ACHN (cell line): ENCODE measurements at regions of chr7 and their contacts with region 1.

Region 1: DNA sequence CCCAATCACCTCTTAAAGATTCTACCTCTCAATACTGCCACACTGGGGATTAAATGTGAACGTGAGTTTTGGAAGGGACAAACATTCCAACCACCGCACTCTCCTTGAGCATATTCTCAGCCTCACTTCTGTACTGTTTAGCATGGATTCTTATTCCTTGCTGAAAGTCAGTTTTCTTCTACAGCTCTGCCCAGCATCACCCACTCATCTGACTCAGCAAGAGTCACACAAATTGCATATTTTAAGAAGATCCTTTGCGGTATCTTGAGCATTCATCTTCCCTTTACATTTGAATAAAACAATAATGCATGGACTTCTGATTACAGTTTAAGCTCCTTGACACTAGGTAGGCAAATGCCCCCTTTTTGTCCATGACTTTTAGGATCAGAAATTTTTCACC is 251.6 kb upstream of the MKLN1 start:
- DNase-seq: no peak

Region 2: DNA sequence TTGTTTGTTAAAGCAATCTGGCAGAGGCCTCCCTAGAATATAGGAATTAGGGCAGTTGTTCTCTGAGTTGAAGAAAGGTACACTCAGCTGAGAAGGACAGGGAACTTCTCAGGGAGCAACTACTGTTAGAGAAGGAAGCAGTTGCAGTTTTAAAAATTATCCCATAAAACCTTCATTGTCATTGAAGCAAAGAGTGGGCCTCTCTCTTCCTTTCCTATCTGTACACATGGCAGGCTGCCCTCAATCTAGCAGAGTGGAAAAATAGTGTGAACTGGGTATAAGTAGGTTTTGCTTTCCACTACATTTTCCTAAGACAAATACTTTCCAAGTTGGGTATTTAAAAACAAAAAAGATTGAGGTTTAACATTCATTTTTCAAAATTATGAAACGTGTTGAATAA is 105.3 kb before region 1 on chr7:
- in situ Hi-C with region 1: no loop called
- DNase-seq: no peak

Region 3: DNA sequence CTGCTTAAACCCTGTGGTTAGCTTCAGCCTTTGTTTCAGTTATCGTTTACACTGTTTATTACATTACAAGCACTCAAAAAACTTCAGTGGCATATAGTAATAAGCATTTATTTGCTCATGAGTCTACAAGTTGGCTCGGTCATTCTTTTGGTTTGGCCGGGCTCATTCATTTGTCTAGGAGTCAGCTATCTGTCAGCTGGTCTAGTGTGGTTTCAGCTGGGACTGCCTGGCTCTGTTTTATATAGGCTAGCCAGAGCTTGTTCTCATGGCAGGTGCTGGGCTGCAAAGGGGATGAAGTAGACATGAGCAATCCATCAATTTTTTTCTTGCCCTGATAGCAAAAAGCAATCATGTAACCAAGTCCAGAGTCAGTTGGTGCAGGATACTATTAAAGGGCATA is 355.3 kb after region 1 on chr7:
- in situ Hi-C with region 1: loop called (anchors 25 kb)
- DNase-seq: no peak

Region 4: DNA sequence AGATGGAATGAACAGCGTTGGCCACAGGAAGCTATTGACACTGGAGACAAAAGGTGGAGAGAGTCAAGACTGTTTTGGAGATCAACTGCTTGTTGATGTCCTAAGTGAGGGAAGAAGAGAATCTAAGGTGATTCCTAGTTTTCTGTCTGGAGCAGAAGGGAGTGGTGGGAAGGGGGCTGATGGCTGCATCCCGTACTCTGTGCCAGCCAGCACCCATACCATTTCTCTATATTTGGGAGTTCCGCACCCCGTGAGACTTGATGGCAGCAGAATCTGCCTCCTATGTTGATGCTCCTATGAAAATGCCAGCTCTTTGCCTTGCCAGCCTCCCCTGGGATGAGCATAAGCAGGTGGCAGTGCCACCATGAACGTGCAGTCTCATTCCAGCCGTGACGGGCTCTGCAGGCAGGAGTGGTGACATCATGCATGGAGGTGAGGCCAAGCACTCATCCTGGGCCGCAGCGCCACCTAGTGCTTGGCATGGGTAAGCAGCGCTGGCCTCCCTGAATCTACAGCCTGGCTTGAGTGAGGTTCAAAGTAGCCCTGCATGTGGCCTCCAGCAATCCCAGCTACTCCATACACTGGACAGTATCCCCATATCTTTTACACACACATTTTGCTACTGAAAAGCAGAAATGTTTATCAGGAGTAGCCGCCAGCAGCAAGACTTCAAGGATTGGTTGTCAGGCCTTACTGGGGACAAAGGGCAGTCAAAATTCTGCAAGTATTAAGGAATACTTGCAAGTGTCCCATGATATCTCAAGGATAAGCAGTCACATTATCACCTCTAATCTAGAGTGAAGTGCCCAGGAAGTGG is 437.4 kb after region 1 on chr7:
- in situ Hi-C with region 1: no loop called
- DNase-seq: peak; percentile 91

Region 5: GRCh38 chr7:131826960-131827359 is 750.9 kb after region 1 on chr7:
- in situ Hi-C with region 1: no loop called
- DNase-seq: no peak